Calu3 (cell line): ENCODE measurements at regions of chr5 and their contacts with region 1.

Region 1: DNA sequence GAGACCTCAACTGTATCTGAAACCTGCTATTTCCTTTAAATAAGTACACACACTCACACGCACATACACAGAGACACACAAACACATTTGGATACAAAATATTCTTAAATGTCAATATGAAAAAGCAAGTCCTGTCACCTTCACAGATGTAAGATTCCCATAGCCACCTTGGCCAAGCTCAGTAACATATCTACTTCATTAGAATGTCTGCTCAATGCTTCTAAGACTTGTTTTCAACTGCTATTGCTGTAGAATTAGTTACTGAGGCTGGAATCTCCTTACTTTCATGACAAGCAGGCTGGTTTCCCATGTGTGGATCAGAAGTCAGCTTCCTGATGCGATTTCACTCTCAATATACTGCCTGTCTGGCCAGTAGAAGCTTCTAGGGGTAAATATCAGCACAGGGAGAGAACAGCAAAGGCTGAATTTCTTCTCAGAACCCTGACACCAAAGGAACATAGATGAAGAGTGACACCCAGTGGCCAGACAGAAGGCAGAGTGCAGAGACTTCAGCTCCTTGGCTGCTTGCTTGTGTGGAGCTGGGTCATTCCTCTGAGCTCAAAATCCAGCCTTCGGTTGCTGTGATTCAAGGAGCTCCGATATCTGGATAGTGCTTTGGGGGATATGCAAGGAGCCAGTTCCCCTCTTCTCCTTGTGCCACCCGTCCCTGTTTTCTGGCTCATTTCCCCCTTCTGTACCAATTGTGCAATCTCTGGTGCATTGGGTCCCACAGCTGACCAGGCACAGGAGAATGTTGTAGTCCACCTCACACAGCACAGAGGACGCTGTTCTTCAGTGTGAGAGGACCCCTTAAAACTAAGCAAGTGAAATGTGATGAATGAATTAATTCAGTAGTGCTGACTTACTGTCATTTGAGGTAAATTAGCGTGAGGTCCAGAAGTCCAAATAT is 26.6 kb upstream of the ABLIM3 start:
- DNase-seq: peak; percentile 87
- H3K4me3 Mint-ChIP-seq: no peak overlapping the region
- H3K27ac Mint-ChIP-seq: peak overlapping the region; percentile 64
- H3K4me1 Mint-ChIP-seq: peaks cover 77% of the 10 kb centered on the region
- H3K27me3 Mint-ChIP-seq: no peaks in the 10 kb centered on the region
- CTCF ChIP-seq: peak; percentile 81

Region 2: GRCh38 chr5:148740966-148741742 is 373.5 kb before region 1 on chr5:
- CTCF ChIA-PET with region 1: interaction called, 74 read pairs
- intact Hi-C with region 1: no loop called
- DNase-seq: peak; percentile 44
- H3K4me3 Mint-ChIP-seq: no peak overlapping the region
- H3K27ac Mint-ChIP-seq: no peak overlapping the region
- H3K4me1 Mint-ChIP-seq: peaks cover 58% of the 10 kb centered on the region
- H3K27me3 Mint-ChIP-seq: no peaks in the 10 kb centered on the region
- CTCF ChIP-seq: peak; percentile 65

Region 3: DNA sequence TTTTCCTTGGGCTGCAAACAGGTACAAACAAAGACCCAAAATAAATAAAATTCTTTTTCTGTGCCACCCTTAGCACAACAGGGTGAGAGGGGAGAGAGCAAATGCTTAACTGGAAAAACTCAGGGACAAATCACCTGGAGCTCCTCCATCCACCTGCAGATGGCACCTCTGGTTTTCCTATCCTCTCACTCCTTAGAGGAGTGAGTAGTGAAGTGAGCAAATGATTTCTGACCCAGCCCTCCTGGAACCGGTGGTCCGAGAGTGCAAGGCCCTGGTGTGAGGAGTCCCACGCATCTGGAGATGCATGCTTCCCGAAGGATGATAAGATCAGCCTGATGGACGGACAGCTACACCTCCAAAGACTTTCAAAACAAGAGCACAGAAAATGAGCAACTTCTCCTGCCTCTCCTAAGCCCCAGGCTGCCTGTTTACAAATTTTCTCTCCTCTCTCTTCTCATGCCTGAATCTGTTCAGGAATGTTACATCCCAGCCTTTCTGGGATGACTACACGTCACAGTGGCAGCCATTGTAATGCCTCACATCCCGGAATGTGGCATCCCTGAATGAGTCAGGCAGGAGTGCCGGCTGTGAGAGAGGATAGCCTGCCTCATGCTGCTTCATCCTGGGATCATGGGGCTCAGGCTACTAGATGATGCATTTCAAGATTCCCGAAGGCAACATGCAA is 201.8 kb before region 1 on chr5:
- CTCF ChIA-PET with region 1: interaction called, 25 read pairs
- intact Hi-C with region 1: loop called (anchors 2 kb)
- DNase-seq: peak; percentile 68
- H3K4me3 Mint-ChIP-seq: no peak overlapping the region
- H3K27ac Mint-ChIP-seq: peak overlapping the region; percentile 93
- H3K4me1 Mint-ChIP-seq: peaks cover 89% of the 10 kb centered on the region
- H3K27me3 Mint-ChIP-seq: no peaks in the 10 kb centered on the region
- CTCF ChIP-seq: peak; percentile 28

Region 4: DNA sequence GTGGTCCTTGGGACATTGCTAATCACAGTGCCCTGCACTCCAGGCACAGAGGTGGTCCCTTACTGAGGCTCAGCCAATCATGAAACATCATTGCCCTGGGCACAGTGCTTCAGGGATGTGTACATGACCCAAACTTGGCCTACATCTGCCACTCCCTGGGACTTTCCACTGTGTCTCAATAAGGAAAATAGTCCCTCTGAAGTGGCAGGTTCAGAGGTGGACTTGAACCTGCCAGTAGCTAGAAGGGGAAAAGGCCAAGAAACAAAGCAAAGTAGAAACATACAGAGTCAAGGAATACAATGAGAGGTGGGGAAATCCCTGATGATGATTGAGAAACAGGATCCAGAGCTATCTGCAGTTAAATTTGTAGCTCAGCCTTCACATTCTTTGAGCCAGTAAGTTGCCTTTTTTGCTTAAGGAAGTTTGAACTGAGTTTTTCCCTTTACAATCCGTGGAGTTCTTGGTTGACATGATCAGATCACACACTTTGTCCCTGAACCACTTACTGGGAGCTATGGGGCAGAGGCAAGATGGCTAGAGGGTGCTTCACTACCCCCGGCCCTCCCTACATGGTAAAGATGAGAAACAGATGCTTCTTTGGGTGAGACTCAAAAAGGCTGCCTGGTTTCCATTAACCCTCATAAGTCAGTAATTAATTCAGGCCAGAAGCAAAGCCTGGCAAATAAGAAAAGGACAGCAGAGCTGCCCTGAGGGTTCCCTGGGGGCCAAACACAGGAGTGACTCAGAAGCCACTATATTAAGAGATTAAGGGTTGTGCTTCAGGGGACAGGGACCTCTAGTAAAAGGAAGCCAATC is 109.4 kb before region 1 on chr5:
- CTCF ChIA-PET with region 1: interaction called, 22 read pairs
- intact Hi-C with region 1: loop called (anchors 2 kb)
- DNase-seq: peak; percentile 78
- H3K4me3 Mint-ChIP-seq: peak overlapping the region; percentile 25
- H3K27ac Mint-ChIP-seq: peak overlapping the region; percentile 88
- H3K4me1 Mint-ChIP-seq: peaks cover 64% of the 10 kb centered on the region
- H3K27me3 Mint-ChIP-seq: no peaks in the 10 kb centered on the region
- CTCF ChIP-seq: no peak

Region 5: DNA sequence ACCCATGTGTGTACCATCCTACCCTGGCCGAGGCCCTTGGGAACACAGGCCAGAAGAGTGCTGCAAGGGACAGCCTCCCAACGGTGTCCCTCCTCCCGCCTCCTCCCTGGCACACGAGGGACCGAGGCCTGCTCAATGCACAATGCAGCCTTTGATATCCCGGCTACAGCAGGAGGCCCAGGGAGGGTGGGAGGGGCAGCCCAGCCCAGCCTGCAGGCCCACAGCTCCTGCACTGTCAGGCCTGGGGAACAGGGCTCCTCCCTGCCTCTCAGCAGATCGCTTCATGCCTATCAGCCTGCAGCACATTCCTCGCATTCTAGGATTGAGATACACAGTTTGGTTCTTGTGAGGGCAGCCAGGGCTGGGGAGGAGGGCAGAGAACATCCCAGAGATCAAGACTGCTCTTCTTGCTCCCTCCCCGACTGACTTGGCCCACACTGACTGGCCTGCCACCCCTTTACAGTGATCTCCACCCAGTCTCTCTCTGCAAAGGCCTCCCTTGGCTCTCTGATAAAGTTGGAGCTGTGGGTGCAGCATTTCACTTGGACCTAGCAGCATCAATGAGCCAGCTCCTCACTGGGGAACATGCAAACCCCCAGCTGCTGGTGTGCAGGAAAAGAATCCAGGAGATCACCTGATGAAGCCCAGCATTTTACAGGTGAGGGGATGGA is 51.5 kb before region 1 on chr5 and contains the start of gene SH3TC2:
- CTCF ChIA-PET with region 1: interaction called, 12 read pairs
- intact Hi-C with region 1: loop called (anchors 1 kb)
- DNase-seq: peak; percentile 90
- H3K4me3 Mint-ChIP-seq: peak within 1 kb of the TSS; percentile 66
- H3K27ac Mint-ChIP-seq: peak within 1 kb of the TSS; percentile 97
- H3K4me1 Mint-ChIP-seq: peaks cover 72% of the 10 kb centered on the region
- H3K27me3 Mint-ChIP-seq: no peaks in the 10 kb centered on the region
- CTCF ChIP-seq: no peak
- total RNA-seq, gene SH3TC2: 54.6 and 60.3 TPM in 2 replicates

Region 6: GRCh38 chr5:149153751-149154610 is 39.3 kb after region 1 on chr5:
- CTCF ChIA-PET with region 1: no interaction called
- intact Hi-C with region 1: no loop called
- DNase-seq: peak; percentile 60
- H3K4me3 Mint-ChIP-seq: peak overlapping the region; percentile 4
- H3K27ac Mint-ChIP-seq: peak overlapping the region; percentile 89
- H3K4me1 Mint-ChIP-seq: peaks cover 3% of the 10 kb centered on the region
- H3K27me3 Mint-ChIP-seq: no peaks in the 10 kb centered on the region
- CTCF ChIP-seq: no peak